CD8-positive, alpha-beta T cell (primary cell): ENCODE measurements at regions of chr16 and their contacts with region 1.

Region 1: GRCh38 chr16:88650749-88651275 is at the start of gene CYBA:
- DNase-seq: peak; percentile 73 to 92 (median 82)
- ATAC-seq: peak; percentile 80
- H3K4me3 ChIP-seq: peak within 1 kb of the TSS; percentile 90 to 95
- H3K4me3 Mint-ChIP-seq: peak within 1 kb of the TSS; percentile 91
- H3K27ac ChIP-seq: peak within 1 kb of the TSS; percentile 91 to 94
- H3K27ac Mint-ChIP-seq: peak within 1 kb of the TSS; percentile 94
- H3K4me1 ChIP-seq: peaks cover 33% of the 10 kb centered on the region
- H3K4me1 Mint-ChIP-seq: peaks cover 21% of the 10 kb centered on the region
- H3K27me3 ChIP-seq: no peaks in the 10 kb centered on the region
- H3K27me3 Mint-ChIP-seq: no peaks in the 10 kb centered on the region
- CTCF ChIP-seq: no peak
- total RNA-seq, gene CYBA: 312 to 320 TPM

Region 2: DNA sequence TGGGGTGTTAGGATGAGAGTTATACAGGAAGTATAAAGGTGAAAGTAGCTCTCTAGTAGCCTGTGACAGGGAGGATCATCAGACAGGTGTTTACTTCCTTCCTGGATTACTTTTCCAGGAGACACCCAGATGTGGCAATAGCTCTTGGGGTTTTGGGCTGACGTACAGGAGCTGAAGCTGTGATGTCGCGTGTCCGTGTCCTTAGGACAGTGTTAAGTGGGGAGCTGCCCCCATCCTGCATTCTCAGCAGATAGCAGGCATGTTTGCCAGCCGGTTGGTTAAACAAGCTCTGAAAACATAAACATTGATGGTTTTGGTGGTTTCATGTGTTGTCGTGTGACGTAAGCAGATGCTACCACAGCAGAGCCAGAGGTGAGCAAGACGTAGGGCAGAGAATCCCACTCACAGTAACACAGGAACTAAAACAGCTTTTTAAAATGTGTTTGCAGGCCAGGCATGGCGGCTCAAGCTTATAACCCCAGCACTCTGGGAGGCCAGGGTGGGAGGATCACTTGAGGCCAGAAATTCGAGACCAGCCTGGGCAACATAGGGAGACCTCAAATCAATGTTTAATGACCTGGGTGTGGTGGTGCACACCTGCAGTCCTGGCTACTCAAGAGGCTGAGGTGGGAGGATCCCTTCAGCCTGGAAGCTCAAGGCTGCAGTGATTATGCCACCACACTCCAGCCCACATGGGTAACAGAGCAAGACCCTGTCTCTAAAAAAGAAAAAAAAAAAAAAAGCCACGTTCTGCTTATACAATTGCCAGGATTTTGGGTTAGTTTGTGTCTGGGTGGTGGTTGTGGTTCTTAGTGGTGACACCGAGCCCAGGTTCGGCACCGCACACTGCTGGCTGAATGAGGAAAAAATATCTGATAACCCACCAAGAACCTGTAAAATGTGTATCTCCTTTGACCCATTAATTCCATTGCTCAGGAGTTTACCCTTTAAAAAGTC is 30.7 kb before region 1 on chr16:
- CTCF ChIA-PET with region 1: no interaction called
- POLR2A ChIA-PET with region 1: interaction called, 9 read pairs
- intact Hi-C with region 1: loop called in 1 of 2 experiments (anchors 1 kb)
- DNase-seq: peak; percentile 58 to 97 (median 76)
- ATAC-seq: peak; percentile 85
- H3K4me3 ChIP-seq: no peak overlapping the region
- H3K4me3 Mint-ChIP-seq: peak overlapping the region; percentile 36
- H3K27ac ChIP-seq: peak overlapping the region; percentile 69 to 89
- H3K27ac Mint-ChIP-seq: peak overlapping the region; percentile 99
- H3K4me1 ChIP-seq: peaks cover 28% of the 10 kb centered on the region
- H3K4me1 Mint-ChIP-seq: peaks cover 25% of the 10 kb centered on the region
- H3K27me3 ChIP-seq: no peaks in the 10 kb centered on the region
- H3K27me3 Mint-ChIP-seq: no peaks in the 10 kb centered on the region
- CTCF ChIP-seq: no peak

Region 3: DNA sequence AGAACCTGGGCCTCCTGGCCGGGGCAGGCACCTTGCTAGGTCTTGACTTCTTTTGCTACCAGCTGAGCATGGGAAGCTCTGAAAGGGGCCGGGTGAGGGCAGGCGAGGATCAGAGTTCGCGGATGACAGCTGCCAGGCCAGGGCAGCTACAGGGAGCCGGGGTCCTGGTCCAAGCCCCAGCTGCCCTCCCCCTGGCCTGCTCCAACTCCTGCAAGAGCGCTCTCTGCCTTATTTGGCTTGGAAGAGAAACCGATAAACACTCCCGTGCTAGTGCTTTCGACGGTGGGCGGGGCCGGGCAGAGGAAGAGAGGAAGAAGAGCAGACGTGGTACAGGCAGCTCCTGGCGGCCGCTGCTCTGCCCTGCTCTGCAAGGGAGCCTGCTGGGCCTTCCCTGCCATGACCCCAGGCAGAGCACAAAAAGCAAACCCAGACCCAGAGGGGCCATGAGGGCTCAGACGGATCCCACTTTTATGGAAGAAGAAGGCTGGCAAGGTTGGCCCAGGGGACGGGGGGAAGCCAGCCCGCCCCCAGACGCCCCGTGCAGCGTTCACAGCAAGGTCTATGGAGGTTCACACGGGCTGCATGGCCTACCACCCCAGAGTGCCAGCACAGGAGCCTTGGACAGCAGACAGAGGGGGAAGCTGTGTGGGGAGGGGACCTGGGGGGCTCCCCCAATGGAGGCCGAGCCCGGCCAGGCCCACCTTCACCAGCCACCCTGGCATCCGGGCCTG is 108.6 kb after region 1 on chr16:
- CTCF ChIA-PET with region 1: no interaction called
- POLR2A ChIA-PET with region 1: no interaction called
- intact Hi-C with region 1: no loop called
- DNase-seq: peak in 5 of 9 experiments; percentile 39 to 64 (median 53)
- ATAC-seq: peak; percentile 70
- H3K4me3 ChIP-seq: no peak overlapping the region
- H3K4me3 Mint-ChIP-seq: peak overlapping the region; percentile 32
- H3K27ac ChIP-seq: no peak overlapping the region
- H3K27ac Mint-ChIP-seq: peak overlapping the region; percentile 70
- H3K4me1 ChIP-seq: no peaks in the 10 kb centered on the region
- H3K4me1 Mint-ChIP-seq: peaks cover 15% of the 10 kb centered on the region
- H3K27me3 ChIP-seq: no peaks in the 10 kb centered on the region
- H3K27me3 Mint-ChIP-seq: no peaks in the 10 kb centered on the region
- CTCF ChIP-seq: no peak